ENCODE measurements at regions of chr9 and their contacts with region 1.

Region 1: DNA sequence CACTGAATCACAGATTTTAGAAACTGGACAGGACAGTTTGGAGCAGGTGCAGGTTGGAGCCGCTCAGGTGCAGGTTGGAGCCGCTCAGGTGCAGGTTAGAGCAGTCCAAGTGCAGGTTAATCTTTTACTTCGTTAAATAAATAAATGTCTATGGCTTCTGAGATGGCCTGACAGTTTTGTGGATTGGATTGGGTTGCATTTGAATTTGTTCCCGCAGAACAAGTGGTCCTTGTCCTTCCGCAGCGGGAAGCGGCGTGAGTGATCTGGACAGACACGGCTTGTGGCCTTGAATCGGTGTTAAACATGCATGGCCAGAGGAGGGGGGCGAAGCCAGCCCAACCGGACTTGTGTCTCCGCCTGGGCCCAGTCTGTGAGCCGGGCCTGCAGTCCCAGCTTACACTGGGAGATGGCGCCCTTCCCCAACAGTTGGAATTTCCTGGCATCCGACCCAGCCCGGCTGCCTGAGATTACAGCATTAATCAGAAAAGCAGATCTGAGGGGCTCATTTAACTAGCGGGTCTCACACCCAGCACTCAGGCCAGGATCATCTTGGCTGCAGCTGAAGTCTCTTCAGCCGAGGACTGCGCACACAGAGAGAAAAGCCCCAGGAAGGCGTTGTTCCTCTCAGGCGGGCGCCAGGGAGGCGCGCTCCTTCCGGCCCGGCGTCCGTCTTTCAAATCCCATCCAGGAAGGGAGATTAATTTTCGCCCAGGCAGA is 1.5 kb upstream of the OLFM1 start:
- DNase-seq: peak; percentile 46 to 63 (median 63)
- H3K4me3 ChIP-seq: peak overlapping the region in 1 of 7 experiments; percentile 17
- H3K27ac ChIP-seq: no peak overlapping the region
- H3K4me1 ChIP-seq: peaks cover 0 to 16% (median 7%) of the 10 kb centered on the region in 4 experiments
- H3K27me3 ChIP-seq: peaks cover 0 to 94% (median 35%) of the 10 kb centered on the region in 5 experiments

Region 2: DNA sequence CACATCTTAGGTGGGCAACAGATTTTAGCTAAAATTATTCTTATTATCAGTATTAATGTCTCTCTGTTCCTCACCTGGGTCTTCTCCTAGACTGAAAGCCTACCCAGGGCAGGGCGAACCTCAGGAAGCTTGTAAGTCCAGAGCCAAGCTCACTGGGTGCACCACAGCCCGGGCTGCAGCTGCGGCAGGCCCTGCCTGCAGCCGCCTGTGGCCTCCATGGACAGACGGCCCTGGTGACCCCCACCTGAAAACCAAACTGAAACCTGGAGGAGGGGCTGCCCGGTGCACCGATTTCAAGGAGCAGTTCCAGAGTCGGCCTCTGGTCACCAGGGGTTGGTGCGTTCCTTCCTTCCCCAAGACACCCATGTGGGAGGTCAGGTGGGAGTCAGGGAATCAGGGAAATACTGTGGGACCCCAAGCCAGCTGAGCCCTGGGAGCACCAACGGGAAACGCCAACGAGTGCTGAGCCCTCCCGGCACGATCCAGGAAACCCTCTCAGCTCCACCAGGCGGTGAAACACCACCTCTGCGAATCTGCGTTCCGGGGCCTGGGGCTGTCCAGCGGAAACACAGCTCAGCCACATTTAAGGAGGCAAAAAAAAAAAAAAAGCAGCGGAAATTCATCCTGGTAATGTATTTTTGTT is 325.0 kb after region 1 on chr9:
- CTCF ChIA-PET with region 1: interaction called, 11 read pairs
- POLR2A ChIA-PET with region 1: no interaction called
- DNase-seq: no peak
- H3K4me3 ChIP-seq: no peak overlapping the region
- H3K27ac ChIP-seq: no peak overlapping the region
- H3K4me1 ChIP-seq: peaks cover 0 to 2% (median 0%) of the 10 kb centered on the region in 4 experiments
- H3K27me3 ChIP-seq: peaks cover 0 to 48% (median 2%) of the 10 kb centered on the region in 5 experiments

Measured in common myeloid progenitor, CD34-positive (primary cell).